Kidney (tissue), 22 donors: ENCODE measurements at regions of chr3 and their contacts with region 1.

Region 1: DNA sequence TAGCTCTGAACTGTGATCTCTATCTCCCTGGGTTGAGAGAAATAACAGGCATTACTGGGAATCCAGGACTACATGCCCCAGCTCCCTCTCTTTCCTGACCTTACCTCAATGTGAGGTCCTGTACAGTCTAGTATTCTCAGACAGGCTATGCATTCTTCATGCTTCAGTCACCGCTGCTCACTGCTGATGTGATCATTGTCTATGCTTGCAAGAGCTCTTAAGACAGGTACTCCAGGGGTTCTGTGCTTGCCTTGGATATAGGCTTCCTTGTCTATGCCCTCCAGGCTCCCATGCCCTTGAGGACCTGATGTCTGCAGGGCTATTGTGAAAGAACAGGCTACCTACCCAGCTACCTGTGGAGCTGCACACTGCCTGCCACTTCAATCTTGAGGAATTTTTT is 183.6 kb downstream of the MBNL1 start:
- DNase-seq: no peak
- H3K4me3 ChIP-seq: no peak overlapping the region
- H3K27ac ChIP-seq: no peak overlapping the region
- H3K4me1 ChIP-seq: peaks cover 0 to 3% (median 0%) of the 10 kb centered on the region in 3 donors
- H3K27me3 ChIP-seq: no peaks in the 10 kb centered on the region
- CTCF ChIP-seq: no peak

Region 2: DNA sequence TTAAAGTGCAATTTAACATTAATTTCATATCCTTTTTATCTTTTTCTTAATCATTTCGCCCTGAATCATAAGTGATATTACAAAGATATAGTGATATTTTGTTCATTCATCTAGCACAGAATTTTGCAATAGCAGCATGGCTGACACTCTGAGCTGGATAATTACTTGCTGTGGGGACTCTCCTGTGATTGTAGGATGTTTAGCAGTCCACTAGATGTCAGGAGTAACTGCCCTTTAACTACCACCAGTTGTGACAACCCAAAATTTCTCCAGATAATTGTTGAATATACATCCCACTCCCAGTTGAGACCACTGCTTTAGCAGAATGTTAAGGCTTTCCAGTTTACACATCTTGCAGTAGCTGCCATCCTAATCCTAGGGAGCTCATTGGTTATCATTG is 380.4 kb before region 1 on chr3:
- intact Hi-C with region 1: loop called (anchors 10 kb)
- DNase-seq: no peak
- H3K4me3 ChIP-seq: no peak overlapping the region
- H3K27ac ChIP-seq: no peak overlapping the region
- H3K4me1 ChIP-seq: no peaks in the 10 kb centered on the region
- H3K27me3 ChIP-seq: no peaks in the 10 kb centered on the region
- CTCF ChIP-seq: peak; percentile 41

Region 3: DNA sequence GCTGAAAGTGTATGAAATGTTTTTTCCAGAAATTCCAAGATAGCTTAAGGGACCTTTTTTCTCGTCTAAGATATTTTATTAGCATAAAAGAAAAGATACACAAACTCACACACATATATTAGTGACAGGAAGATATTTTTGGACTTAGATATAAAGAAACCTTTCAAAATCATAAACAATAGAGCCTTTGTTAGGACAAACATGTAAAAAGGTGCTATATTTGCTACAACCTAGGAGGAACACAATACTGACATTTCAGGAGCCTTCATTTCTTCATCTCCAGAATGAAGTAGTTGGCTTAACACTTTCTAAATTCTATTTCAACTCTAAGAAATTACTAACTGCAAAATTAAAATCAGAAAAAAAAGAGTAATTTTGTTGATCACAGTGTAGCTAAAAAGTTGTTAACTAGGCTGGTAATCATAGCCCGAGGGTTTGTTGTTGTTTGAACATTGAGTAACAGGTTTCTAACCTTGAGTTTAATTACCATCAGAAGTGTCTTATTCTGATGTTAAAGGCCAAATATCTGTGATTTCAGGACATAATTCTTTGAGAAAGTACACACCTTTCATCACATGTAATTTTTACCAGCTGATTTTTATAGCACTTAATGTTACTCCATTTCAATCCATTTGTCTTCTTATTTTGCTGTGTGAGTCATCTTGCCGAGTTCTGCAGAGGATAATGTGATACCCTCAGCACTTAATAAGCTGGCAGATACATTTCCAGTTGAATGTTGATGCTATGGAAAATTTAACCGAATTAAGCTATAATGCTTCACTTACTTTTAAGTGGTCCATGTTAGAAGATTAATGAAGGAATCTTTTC is 86.3 kb before region 1 on chr3:
- intact Hi-C with region 1: no loop called
- DNase-seq: no peak
- H3K4me3 ChIP-seq: no peak overlapping the region
- H3K27ac ChIP-seq: no peak overlapping the region
- H3K4me1 ChIP-seq: peaks cover 0 to 9% (median 4%) of the 10 kb centered on the region in 3 donors
- H3K27me3 ChIP-seq: no peaks in the 10 kb centered on the region
- CTCF ChIP-seq: no peak

Region 4: GRCh38 chr3:152508705-152509104 is 56.4 kb after region 1 on chr3:
- intact Hi-C with region 1: no loop called
- DNase-seq: peak in 2 of 5 donors; percentile 20 to 27
- H3K4me3 ChIP-seq: no peak overlapping the region
- H3K27ac ChIP-seq: no peak overlapping the region
- H3K4me1 ChIP-seq: no peaks in the 10 kb centered on the region
- H3K27me3 ChIP-seq: no peaks in the 10 kb centered on the region
- CTCF ChIP-seq: peak; percentile 24

Region 5: GRCh38 chr3:152656214-152656971 is 204.1 kb after region 1 on chr3:
- intact Hi-C with region 1: no loop called
- DNase-seq: peak in 4 of 5 donors; percentile 14 to 73 (median 52)
- H3K4me3 ChIP-seq: peak overlapping the region in 2 of 3 donors; percentile 3 to 4
- H3K27ac ChIP-seq: no peak overlapping the region
- H3K4me1 ChIP-seq: peaks cover 0 to 6% (median 3%) of the 10 kb centered on the region in 3 donors
- H3K27me3 ChIP-seq: no peaks in the 10 kb centered on the region
- CTCF ChIP-seq: no peak